Sciatic nerve (tissue), 2 donors: ENCODE measurements at regions of chr9 and their contacts with region 1.

Region 1: GRCh38 chr9:3521966-3522365 is 3.8 kb downstream of the RFX3 start:
- DNase-seq: no peak
- ATAC-seq: no peak

Region 2: GRCh38 chr9:3238236-3238635 is 283.7 kb before region 1 on chr9:
- intact Hi-C with region 1: loop called (anchors 5 kb)
- DNase-seq: no peak
- ATAC-seq: no peak